Vagina (tissue), 2 donors: ENCODE measurements at regions of chr12 and their contacts with region 1.

Region 1: GRCh38 chr12:122021822-122022526 is at the start of gene BCL7A:
- DNase-seq: no peak
- H3K4me3 ChIP-seq: peak within 1 kb of the TSS; percentile 70 to 87
- H3K27ac ChIP-seq: peak within 1 kb of the TSS; percentile 89
- H3K4me1 ChIP-seq: peaks cover 30% of the 10 kb centered on the region
- H3K27me3 ChIP-seq: no peaks in the 10 kb centered on the region
- CTCF ChIP-seq: no peak
- POLR2A ChIP-seq: peak in 1 of 2 donors; percentile 30
- total RNA-seq, gene BCL7A: 8.1 TPM

Region 2: DNA sequence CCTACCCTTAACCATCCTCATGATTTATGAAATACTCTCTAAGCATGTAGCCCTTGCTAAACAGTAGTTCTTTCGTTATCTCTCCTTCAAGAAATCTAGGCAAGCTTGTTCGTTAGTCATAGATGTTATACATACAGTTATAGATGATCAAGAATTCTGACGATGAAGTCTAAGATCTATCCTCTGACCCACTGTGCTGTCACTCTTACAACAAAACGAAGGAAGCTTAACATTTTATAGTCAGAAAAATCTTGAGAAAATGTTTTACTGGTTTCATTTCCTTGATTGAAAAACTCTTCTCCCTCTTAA is 1186.7 kb before region 1 on chr12:
- intact Hi-C with region 1: loop called (anchors 5 kb)
- DNase-seq: no peak
- H3K4me3 ChIP-seq: no peak overlapping the region
- H3K27ac ChIP-seq: no peak overlapping the region
- H3K4me1 ChIP-seq: peaks cover 66% of the 10 kb centered on the region
- H3K27me3 ChIP-seq: no peaks in the 10 kb centered on the region
- CTCF ChIP-seq: no peak
- POLR2A ChIP-seq: no peak

Region 3: GRCh38 chr12:121917979-121918678 is 103.8 kb before region 1 on chr12 and contains the start of gene CFAP251:
- intact Hi-C with region 1: loop called (anchors 10 kb)
- DNase-seq: no peak
- H3K4me3 ChIP-seq: peak within 1 kb of the TSS; percentile 29 to 37
- H3K27ac ChIP-seq: peak within 1 kb of the TSS; percentile 54
- H3K4me1 ChIP-seq: peaks cover 5% of the 10 kb centered on the region
- H3K27me3 ChIP-seq: no peaks in the 10 kb centered on the region
- CTCF ChIP-seq: peak; percentile 54 to 75 (median 66)
- POLR2A ChIP-seq: no peak
- total RNA-seq, gene CFAP251: 8.8 TPM